Astrocyte of the cerebellum (primary cell): ENCODE measurements at regions of chr11 and their contacts with region 1.

Region 1: DNA sequence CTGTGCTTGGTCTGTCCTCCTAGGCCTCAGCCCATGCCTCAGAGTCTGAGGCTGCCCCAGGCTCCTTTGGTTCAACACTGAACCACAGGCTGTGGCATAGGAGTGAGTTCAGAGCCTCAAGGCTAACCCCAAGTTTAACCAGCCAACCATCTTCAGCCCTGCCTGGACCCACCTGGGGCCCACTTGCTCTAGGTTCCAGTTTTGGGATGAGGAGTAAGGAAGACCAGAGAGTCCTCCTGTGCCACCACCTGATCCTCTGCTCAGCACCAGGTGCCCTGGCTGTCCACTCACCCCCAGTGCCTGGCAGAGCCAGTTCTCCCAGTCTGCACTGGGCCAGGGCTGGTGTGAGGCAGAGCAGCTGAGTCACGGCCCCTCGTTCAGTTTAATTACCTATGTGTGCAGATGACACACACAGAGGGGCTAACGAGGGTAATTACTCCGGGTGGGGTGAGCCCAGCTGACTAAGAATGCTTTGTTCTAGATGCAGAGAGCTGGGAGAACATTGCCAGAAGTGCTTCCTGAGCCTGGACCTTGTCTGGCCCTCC is 12.0 kb upstream of the TMPRSS13 start:
- DNase-seq: no peak
- H3K4me3 ChIP-seq: no peak overlapping the region
- CTCF ChIP-seq: no peak

Region 2: DNA sequence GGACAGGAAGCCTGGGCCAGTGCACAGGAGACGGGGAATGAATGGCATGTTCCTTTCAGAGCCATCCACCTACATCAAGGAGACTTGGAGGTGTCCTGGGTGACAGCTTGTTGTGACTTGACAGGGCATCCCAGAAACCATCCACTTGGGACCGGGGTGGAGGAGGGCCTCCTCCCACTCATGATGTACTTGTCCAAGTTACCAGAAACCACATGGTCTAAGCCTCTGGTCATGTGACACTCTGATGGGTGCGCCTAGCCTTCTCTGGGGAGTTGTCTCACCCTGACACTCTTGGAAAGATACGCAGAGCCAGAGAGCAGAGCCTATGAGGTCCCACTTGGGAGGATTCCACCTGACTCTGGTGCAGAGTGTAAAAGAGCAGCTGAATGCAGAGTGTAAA is 43.2 kb before region 1 on chr11:
- in situ Hi-C with region 1: loop called (anchors 5 kb)
- DNase-seq: no peak
- H3K4me3 ChIP-seq: no peak overlapping the region
- CTCF ChIP-seq: no peak

Region 3: GRCh38 chr11:117997823-117998579 is 56.8 kb after region 1 on chr11:
- in situ Hi-C with region 1: no loop called
- DNase-seq: no peak
- H3K4me3 ChIP-seq: no peak overlapping the region
- CTCF ChIP-seq: no peak

Region 4: DNA sequence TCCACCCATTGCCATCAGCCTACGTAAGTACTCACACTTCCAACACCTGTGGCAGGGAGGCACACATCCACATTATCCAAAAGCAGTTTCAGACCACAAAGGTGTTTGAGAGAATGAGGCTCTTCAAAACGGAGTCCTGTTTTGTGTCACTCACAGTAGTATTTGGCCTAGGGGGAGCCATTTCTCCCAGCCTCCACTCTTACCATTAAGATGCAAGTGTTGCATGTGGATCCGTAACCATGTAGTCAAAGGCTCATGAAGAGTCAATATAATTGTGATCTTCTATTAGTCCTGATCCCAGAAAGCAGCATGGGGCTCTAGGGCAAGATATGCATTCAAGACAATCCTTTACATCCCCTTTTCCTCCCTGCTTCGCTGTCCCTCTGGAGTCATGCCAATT is 86.5 kb after region 1 on chr11:
- in situ Hi-C with region 1: no loop called
- DNase-seq: no peak
- H3K4me3 ChIP-seq: no peak overlapping the region
- CTCF ChIP-seq: no peak

Region 5: DNA sequence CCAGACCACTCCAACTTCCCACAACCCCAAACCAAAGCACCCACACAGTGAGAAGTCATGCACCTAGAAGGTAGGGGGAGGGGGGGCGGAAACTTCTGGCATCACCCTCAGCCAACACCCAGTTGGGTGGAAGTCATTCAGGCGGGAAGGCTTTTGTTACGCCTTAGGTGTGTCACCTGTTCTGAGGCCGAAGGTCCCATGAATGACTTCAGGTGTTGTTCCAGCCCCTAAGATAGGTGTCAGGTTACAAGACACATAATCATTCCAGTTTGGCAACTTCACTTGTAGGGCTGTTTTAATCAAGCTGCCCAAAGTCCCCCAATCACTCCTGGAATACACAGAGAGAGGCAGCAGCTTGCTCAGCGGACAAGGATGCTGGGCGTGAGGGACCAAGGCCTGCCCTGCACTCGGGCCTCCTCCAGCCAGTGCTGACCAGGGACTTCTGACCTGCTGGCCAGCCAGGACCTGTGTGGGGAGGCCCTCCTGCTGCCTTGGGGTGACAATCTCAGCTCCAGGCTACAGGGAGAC is 135.6 kb after region 1 on chr11 and contains the start of gene TMPRSS4:
- in situ Hi-C with region 1: no loop called
- DNase-seq: no peak
- H3K4me3 ChIP-seq: no peak within 1 kb of the TSS
- CTCF ChIP-seq: no peak